ENCODE measurements at regions of chr12 and their contacts with region 1.

Region 1: DNA sequence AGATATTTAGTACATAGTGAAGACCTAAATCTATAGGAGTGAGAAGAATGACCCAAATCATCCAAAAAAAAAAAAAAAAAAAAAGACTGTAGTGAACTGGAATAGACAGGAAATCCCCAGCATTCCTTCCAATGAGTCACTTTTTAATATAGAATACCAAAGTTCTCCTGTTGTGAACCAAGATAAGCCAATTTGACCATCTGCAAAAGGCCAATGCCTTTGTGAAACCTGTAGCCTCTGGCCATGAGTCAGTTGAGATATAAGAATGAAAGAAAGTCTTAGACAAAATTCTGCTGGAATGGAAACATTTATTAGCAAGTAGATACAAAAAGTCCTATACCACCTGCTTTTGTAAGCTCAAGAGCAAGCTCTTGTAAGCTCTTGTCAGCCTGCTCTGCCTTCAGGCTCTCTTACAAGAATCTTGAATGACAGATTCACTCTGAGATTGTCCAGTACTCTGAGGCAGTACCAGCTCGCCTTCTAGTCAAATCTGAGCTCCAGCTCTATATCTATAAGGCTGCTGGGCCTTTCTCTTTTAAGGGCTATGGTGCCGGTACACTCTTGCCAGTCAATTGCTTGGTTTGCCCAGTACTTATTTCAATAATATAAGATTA is 243.0 kb upstream of the TMTC1 start:
- DNase-seq: peak; percentile 95
- H3K4me3 ChIP-seq: no peak overlapping the region
- H3K27ac ChIP-seq: peak overlapping the region; percentile 79
- H3K4me1 ChIP-seq: peaks cover 25% of the 10 kb centered on the region
- H3K27me3 ChIP-seq: no peaks in the 10 kb centered on the region
- CTCF ChIP-seq: no peak
- POLR2A ChIP-seq: peak; percentile 61

Region 2: DNA sequence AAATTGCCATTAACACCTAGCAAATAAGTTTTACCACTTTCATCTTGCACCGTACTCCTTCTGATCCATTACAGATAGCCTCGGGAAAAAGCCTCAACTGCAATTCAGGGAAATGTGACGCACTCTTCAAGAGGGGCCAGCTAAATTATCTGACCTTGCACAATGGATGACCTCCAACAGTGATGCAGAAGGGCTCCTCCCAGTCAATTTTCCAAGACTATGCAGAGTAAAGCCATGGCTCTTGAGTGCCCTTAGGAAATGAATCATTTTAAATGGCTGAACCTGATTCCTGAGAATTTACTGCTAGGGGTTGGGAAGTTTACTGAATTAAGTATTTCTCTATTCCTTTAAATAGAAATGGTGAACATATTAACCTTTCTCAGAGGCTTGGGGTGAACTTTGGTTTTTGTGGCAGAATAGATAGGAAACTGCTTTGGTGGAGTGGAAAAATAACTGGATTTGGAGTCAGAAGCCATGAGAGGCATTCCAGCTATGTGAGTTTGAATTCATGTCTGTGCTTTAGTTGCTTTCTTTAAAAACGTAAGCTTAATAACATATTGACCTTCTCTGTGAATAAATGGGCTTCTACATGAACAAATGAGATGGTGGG is 464.5 kb before region 1 on chr12:
- CTCF ChIA-PET with region 1: no interaction called
- POLR2A ChIA-PET with region 1: no interaction called
- dilution Hi-C with region 1: no loop called
- intact Hi-C with region 1: loop called (anchors 5 kb)
- DNase-seq: peak; percentile 96
- H3K4me3 ChIP-seq: peak overlapping the region in 1 of 3 experiments; percentile 20
- H3K27ac ChIP-seq: peak overlapping the region; percentile 52
- H3K4me1 ChIP-seq: peaks cover 25% of the 10 kb centered on the region
- H3K27me3 ChIP-seq: no peaks in the 10 kb centered on the region
- CTCF ChIP-seq: no peak
- POLR2A ChIP-seq: no peak

Region 3: DNA sequence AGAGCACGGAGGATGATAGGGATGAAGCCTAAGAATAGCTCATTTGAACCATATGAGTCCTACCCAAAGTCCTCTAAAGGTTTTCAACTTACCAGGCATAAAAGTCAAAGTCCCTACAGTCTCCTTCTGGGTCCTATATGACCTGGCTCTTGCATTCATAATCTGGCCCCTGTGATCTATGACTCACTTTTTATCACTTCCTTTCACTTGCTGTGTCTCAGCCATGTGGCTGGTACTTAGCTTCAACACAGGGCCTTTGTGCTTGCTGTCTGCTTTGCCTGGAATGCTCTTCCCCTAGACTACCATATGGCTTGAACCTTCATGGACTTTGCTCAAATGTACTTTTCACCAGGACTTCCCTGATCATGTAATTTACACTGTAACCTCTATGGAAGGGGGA is 105.4 kb before region 1 on chr12:
- CTCF ChIA-PET with region 1: interaction called, 3 read pairs
- POLR2A ChIA-PET with region 1: no interaction called
- dilution Hi-C with region 1: no loop called
- intact Hi-C with region 1: loop called (anchors 2 kb)
- DNase-seq: peak; percentile 84
- H3K4me3 ChIP-seq: no peak overlapping the region
- H3K27ac ChIP-seq: peak overlapping the region; percentile 13
- H3K4me1 ChIP-seq: peaks cover 11% of the 10 kb centered on the region
- H3K27me3 ChIP-seq: no peaks in the 10 kb centered on the region
- CTCF ChIP-seq: no peak
- POLR2A ChIP-seq: no peak

Region 4: GRCh38 chr12:29970501-29970900 is 56.2 kb before region 1 on chr12:
- CTCF ChIA-PET with region 1: interaction called, 3 read pairs
- POLR2A ChIA-PET with region 1: no interaction called
- dilution Hi-C with region 1: no loop called
- intact Hi-C with region 1: loop called (anchors 1 kb)
- DNase-seq: peak; percentile 90
- H3K4me3 ChIP-seq: no peak overlapping the region
- H3K27ac ChIP-seq: peak overlapping the region; percentile 79
- H3K4me1 ChIP-seq: peaks cover 21% of the 10 kb centered on the region
- H3K27me3 ChIP-seq: no peaks in the 10 kb centered on the region
- CTCF ChIP-seq: no peak
- POLR2A ChIP-seq: no peak

Region 5: DNA sequence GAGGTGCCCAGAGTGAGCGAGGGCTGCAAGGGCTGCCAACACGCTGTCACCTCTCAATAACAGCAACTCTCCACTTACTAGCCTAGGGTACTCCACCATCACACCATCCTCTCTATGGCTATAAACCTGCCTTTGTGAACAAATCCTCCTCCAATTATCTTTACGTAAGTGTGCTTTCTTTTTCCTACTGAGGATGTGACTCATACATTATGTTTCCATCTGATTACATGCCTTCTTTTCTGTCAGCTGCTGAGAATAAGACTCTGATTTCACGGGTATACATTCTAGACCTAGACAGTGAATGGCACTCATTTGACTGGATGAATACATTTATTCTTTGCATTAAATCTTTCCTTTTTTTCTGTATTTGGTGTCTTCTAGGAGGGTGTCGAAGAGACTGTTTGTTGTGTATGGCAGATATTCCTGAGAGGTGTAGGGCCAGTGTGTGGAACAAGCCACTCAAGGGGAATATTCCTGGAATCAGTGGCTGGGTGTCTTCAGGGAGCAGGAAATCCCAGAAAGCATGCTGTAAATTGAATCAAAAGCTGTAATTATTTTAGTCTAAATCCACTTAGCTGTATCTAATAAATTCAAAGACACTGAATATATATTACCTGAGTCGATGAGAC is 84.3 kb after region 1 on chr12:
- CTCF ChIA-PET with region 1: no interaction called
- POLR2A ChIA-PET with region 1: no interaction called
- dilution Hi-C with region 1: no loop called
- intact Hi-C with region 1: loop called (anchors 1 kb)
- DNase-seq: peak; percentile 93
- H3K4me3 ChIP-seq: no peak overlapping the region
- H3K27ac ChIP-seq: peak overlapping the region; percentile 60
- H3K4me1 ChIP-seq: peaks cover 6% of the 10 kb centered on the region
- H3K27me3 ChIP-seq: no peaks in the 10 kb centered on the region
- CTCF ChIP-seq: no peak
- POLR2A ChIP-seq: no peak